ENCODE measurements at regions of chr2 and their contacts with region 1.

Region 1: GRCh38 chr2:46062637-46063412 is 234.4 kb upstream of the EPAS1 start:
- H3K4me3 Mint-ChIP-seq: no peak overlapping the region
- H3K27ac Mint-ChIP-seq: no peak overlapping the region
- H3K4me1 Mint-ChIP-seq: peaks cover 6% of the 10 kb centered on the region
- H3K27me3 Mint-ChIP-seq: no peaks in the 10 kb centered on the region

Region 2: GRCh38 chr2:45610281-45611019 is 452.4 kb before region 1 on chr2:
- intact Hi-C with region 1: no loop called
- H3K4me3 Mint-ChIP-seq: peak overlapping the region; percentile 96
- H3K27ac Mint-ChIP-seq: peak overlapping the region; percentile 97
- H3K4me1 Mint-ChIP-seq: peaks cover 31% of the 10 kb centered on the region
- H3K27me3 Mint-ChIP-seq: no peaks in the 10 kb centered on the region

Region 3: GRCh38 chr2:46296840-46297545 is 234.2 kb after region 1 on chr2 and contains the start of gene EPAS1:
- intact Hi-C with region 1: loop called (anchors 5 kb)
- H3K4me3 Mint-ChIP-seq: peak within 1 kb of the TSS; percentile 90
- H3K27ac Mint-ChIP-seq: peak within 1 kb of the TSS; percentile 93
- H3K4me1 Mint-ChIP-seq: peaks cover 49% of the 10 kb centered on the region
- H3K27me3 Mint-ChIP-seq: peaks cover 50% of the 10 kb centered on the region

Region 4: DNA sequence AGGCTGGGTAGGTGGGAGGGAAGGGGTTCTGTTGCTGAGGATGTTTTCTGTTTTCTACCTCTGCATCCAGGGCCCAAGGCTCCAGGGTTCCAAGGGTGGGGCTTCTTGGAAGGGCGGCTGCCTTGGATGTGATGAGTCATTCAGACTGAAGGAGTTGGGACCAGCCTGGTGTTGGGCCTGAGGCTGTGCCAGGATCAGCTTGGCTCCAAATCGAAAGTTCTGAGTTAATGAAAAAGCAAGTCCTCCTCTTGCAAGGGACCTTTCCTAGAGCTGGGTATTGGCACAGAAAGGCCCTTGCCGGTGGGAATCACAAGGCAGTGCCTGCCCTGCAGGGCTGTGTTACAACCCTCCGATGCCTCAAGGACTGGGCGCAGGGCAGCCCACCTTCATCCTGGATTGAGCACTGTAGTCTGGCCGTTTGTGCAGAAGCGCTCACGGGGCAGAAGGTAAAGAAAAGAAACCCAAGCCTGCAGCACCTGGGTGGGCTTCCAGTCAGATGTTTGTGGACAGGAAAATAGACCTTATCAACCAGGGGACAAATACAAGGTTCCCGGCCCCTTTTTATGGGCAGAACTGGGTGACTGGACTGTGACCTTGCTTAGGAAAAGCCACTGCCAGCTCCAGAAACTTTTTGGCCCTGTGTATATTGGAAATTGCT is 905.3 kb after region 1 on chr2:
- intact Hi-C with region 1: no loop called
- H3K4me3 Mint-ChIP-seq: peak overlapping the region; percentile 66
- H3K27ac Mint-ChIP-seq: peak overlapping the region; percentile 95
- H3K4me1 Mint-ChIP-seq: peaks cover 95% of the 10 kb centered on the region
- H3K27me3 Mint-ChIP-seq: no peaks in the 10 kb centered on the region

Measured in dendritic cell treated with granulocyte-macrophage colony-stimulating factor and Interleukin-4, amounts not matched to agents 40 ng/mL and 50 ng/mL, for 4 days (primary cell).